Heart right ventricle (tissue), 16 donors: ENCODE measurements at regions of chr3 and their contacts with region 1.

Region 1: GRCh38 chr3:118943597-118943996 is 91.0 kb downstream of the IGSF11 start:
- DNase-seq: no peak
- ATAC-seq: peak in 1 of 8 donors; percentile 39
- H3K4me3 ChIP-seq: no peak overlapping the region
- H3K27ac ChIP-seq: no peak overlapping the region
- H3K4me1 ChIP-seq: peaks cover 0 to 10% (median 0%) of the 10 kb centered on the region in 9 donors
- H3K27me3 ChIP-seq: no peaks in the 10 kb centered on the region
- CTCF ChIP-seq: no peak

Region 2: GRCh38 chr3:118890186-118890585 is 53.4 kb before region 1 on chr3:
- intact Hi-C with region 1: loop called in 1 of 10 experiments (anchors 5 kb)
- DNase-seq: no peak
- ATAC-seq: no peak
- H3K4me3 ChIP-seq: no peak overlapping the region
- H3K27ac ChIP-seq: no peak overlapping the region
- H3K4me1 ChIP-seq: no peaks in the 10 kb centered on the region
- H3K27me3 ChIP-seq: peaks cover 0 to 60% (median 23%) of the 10 kb centered on the region in 7 donors
- CTCF ChIP-seq: no peak

Region 3: DNA sequence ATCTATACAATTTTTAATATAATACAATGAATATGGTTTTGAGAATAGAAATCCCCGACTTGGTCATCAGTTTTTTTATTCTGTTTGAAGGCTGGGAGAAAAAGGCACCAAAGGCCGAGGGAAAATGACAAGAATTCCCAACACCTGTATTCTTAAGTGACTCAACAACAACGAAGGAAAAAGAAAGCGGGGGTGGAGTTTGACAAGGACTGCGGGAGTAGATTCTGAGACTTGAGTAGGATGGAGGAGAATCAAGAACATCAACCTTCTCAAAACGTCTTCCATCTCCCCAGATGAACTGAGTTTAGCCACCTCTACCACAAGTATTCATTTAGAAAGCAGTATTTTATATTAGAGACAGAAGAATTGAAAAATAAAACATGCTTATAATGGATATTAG is 16.1 kb before region 1 on chr3:
- intact Hi-C with region 1: no loop called
- DNase-seq: no peak
- ATAC-seq: no peak
- H3K4me3 ChIP-seq: no peak overlapping the region
- H3K27ac ChIP-seq: no peak overlapping the region
- H3K4me1 ChIP-seq: no peaks in the 10 kb centered on the region
- H3K27me3 ChIP-seq: no peaks in the 10 kb centered on the region
- CTCF ChIP-seq: no peak

Region 4: DNA sequence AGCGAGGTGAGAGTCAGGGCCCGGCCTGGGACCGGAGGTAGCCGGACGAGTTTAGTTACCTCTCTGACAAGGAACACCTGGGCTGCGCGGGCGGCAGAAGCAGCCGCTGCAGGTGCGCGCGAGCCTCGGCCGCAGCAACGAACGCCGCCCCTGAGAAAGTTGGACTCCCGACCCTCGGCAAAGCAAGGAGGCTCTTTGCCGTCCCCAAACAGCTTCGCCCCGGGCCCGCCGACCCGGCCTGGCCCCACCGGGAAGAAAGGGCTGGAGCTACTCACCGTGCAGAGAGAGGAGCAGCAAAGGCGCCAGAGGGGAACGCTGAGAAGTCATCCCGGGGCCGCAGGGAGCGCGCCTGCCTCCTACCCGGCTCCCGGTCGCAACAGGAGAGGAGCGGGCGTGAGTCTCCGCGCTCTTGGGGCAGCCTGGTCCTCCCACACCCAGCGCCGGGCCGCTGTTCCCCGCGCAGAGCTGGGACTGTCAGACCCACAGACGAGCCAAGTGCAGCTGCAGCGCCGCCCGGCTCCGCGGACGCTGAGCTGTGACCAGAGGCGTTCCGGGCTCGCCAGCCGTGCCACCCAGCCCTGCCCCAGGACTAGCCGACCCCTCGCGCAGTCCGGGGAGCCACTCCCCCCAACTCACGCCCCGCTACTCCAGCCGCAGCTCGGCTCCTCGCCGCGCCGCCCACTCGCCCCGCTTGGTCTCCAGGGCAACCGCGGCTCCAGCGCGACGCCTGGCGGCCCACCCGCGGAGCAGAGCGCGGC is 90.8 kb after region 1 on chr3 and contains the start of gene IGSF11:
- intact Hi-C with region 1: loop called in 1 of 10 experiments (anchors 10 kb)
- DNase-seq: peak; percentile 44 to 66
- ATAC-seq: peak; percentile 89 to 98 (median 93)
- H3K4me3 ChIP-seq: peak within 1 kb of the TSS; percentile 36 to 73 (median 64)
- H3K27ac ChIP-seq: peak within 1 kb of the TSS in 1 of 10 donors; percentile 22
- H3K4me1 ChIP-seq: peaks cover 0 to 13% (median 3%) of the 10 kb centered on the region in 9 donors
- H3K27me3 ChIP-seq: peaks cover 0 to 67% (median 47%) of the 10 kb centered on the region in 7 donors
- CTCF ChIP-seq: peak; percentile 33 to 79 (median 54)
- total RNA-seq, gene IGSF11: 0.45 to 6.1 (median 1.6) TPM